A673 (cell line): ENCODE measurements at regions of chr7 and their contacts with region 1.

Region 1: GRCh38 chr7:133091943-133092464 is 10.1 kb upstream of the CHCHD3 start:
- DNase-seq: no peak
- H3K4me3 ChIP-seq: no peak overlapping the region
- H3K27ac ChIP-seq: no peak overlapping the region
- H3K4me1 ChIP-seq: no peaks in the 10 kb centered on the region
- H3K27me3 ChIP-seq: peaks cover 4% of the 10 kb centered on the region
- CTCF ChIP-seq: no peak

Region 2: DNA sequence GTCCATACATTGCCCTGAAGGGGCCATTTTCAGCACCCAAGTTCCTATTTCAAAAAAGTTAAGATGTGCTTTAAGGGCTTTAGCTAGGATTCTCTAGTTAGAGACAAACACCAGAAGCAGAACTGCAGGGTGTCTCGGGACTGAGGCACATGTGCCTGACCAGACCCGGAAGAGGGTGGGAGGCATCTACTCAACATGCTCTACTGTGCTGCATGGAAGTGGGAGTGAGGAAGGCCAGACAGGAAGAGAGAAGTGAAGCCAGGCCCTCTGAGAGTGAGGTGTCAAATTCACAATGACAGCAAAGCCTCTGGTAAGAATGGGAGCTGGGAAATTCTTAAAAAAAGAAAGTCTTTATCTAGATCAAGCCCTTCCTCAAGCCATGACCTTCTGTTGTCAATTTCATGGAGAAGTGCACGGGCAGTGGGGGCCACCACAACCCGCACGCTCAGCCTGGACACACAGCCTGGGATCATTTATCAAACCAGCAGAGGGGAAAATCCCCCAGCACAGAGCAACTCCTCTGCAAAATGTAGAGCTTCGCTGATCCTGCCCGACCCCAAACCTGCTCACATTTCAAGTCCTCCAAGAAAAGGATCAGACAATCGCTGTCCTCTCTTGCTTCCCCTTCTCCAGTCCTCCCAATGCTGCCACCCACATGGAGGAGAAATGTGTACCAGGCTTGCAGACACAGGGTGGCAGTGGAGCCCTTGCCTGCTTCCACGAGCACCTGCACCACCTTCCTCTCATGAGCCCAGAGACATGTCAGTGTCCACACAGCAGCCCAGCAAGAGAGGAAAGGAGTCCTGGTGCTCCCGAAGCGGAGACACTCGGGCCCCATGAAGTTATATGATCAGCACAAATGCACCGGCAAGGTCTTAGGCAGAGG is 554.3 kb before region 1 on chr7:
- CTCF ChIA-PET with region 1: no interaction called
- POLR2A ChIA-PET with region 1: no interaction called
- intact Hi-C with region 1: no loop called
- DNase-seq: no peak
- H3K4me3 ChIP-seq: no peak overlapping the region
- H3K27ac ChIP-seq: no peak overlapping the region
- H3K4me1 ChIP-seq: no peaks in the 10 kb centered on the region
- H3K27me3 ChIP-seq: no peaks in the 10 kb centered on the region
- CTCF ChIP-seq: no peak

Region 3: GRCh38 chr7:133081599-133082389 is 10.2 kb before region 1 on chr7 and contains the start of gene CHCHD3:
- CTCF ChIA-PET with region 1: no interaction called
- POLR2A ChIA-PET with region 1: interaction called, 13 read pairs
- intact Hi-C with region 1: no loop called
- DNase-seq: peak; percentile 100
- H3K4me3 ChIP-seq: peak within 1 kb of the TSS; percentile 92
- H3K27ac ChIP-seq: peak within 1 kb of the TSS; percentile 84
- H3K4me1 ChIP-seq: peaks cover 4% of the 10 kb centered on the region
- H3K27me3 ChIP-seq: no peaks in the 10 kb centered on the region
- CTCF ChIP-seq: no peak
- total RNA-seq, gene CHCHD3: 114 and 128 TPM in 2 replicates

Region 4: DNA sequence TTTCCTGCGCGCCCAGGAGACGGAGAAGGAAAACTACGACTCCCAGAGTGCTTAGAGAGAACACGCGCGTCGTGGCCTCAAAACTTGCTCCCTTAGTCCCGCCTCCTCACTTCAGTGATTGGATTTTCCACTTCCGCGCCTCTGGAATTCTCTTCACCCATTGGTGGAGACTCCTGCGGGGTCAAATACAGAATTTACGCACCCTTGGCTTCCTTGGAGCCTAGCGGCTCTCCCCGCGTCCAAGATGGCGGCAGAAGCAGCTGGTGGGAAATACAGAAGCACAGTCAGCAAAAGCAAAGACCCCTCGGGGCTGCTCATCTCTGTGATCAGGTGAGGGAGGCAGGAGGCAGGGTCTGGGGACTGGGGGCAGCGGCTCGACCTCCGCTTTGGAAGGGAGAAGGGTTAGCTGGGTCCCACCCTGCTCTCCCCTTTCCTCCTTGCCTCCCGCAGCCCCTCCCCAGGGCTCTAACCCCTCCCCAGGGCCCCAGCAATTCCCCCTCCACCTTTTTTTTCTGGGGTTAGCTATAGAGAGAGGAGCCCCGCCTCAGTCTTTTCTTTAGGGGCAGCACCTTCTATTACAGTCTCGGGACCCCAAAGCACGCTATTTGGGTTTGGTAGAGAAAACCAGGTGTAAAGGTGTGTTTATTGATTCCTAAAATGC is 161.0 kb after region 1 on chr7 and contains the start of gene EXOC4:
- CTCF ChIA-PET with region 1: no interaction called
- POLR2A ChIA-PET with region 1: no interaction called
- intact Hi-C with region 1: no loop called
- DNase-seq: peak; percentile 99
- H3K4me3 ChIP-seq: peak within 1 kb of the TSS; percentile 93
- H3K27ac ChIP-seq: peak within 1 kb of the TSS; percentile 83
- H3K4me1 ChIP-seq: no peaks in the 10 kb centered on the region
- H3K27me3 ChIP-seq: no peaks in the 10 kb centered on the region
- CTCF ChIP-seq: no peak
- total RNA-seq, gene EXOC4: 66.1 and 74.4 TPM in 2 replicates